ENCODE measurements at regions of chr11 and their contacts with region 1.

Region 1: GRCh38 chr11:6353367-6353987 is 33.2 kb upstream of the CAVIN3 start:
- DNase-seq: peak; percentile 68

Region 2: DNA sequence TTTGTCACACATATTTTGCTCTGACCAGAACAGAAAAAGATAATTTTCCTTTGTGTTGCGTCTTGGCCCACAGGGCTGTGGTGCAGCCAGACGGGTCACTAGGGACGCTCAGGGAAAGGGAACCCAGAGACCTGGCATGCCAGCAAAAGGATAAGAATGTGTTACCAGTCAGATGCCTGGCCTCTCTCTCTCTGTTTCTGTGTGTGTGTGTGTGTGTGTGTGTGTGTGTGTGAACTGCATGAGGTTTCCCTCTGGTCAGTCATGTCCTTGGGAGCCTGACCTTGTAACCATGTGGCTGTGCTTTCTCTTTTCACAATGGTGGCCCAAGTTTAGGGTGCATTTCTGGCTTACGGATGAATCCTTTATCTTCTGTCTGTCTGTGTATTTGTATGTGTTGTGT is 68.5 kb before region 1 on chr11:
- CTCF ChIA-PET with region 1: interaction called, 12 read pairs
- POLR2A ChIA-PET with region 1: no interaction called
- DNase-seq: no peak

Measured in HEK293T (cell line).